Posterior vena cava (tissue), 2 donors: ENCODE measurements at regions of chr4 and their contacts with region 1.

Region 1: GRCh38 chr4:87848622-87849351 is 16.0 kb downstream of the MEPE start:
- DNase-seq: peak; percentile 76

Region 2: DNA sequence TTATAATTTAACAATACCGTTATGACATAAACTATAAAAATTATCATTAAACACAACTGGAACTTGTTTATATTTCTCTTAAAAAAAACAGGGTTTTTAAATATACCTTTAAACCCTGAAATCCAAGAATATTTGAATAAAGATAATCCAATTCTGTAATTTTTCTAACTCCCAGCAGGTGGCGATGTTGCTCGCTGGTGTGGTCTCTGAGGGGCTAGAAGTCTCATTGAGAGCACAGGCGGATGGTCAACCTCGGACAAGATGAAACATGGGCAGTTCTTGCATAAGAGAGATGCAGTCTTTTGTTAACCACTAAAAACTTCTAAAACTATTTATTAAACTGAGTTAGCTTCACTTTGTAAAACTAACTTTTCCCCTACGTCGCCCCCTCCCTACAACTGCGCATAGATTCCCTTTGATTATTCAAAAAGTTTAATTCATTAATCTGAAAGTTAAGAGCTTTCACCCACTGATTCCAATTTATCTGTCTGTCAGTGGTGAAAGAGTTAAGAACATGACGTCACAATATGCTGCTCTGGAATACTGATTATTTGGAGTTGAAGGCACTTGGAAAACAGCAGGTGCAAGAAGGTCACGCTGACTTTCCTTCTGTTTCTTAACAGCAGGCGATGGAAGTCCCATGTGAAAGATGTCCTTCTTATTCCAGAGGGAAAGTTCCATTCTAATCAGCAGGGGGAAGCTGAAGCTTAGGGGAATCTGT is 169.2 kb before region 1 on chr4:
- intact Hi-C with region 1: loop called in 1 of 2 experiments (anchors 5 kb)
- DNase-seq: no peak

Region 3: GRCh38 chr4:87973283-87974169 is 124.7 kb after region 1 on chr4:
- intact Hi-C with region 1: loop called in 1 of 2 experiments (anchors 5 kb)
- DNase-seq: no peak

Region 4: DNA sequence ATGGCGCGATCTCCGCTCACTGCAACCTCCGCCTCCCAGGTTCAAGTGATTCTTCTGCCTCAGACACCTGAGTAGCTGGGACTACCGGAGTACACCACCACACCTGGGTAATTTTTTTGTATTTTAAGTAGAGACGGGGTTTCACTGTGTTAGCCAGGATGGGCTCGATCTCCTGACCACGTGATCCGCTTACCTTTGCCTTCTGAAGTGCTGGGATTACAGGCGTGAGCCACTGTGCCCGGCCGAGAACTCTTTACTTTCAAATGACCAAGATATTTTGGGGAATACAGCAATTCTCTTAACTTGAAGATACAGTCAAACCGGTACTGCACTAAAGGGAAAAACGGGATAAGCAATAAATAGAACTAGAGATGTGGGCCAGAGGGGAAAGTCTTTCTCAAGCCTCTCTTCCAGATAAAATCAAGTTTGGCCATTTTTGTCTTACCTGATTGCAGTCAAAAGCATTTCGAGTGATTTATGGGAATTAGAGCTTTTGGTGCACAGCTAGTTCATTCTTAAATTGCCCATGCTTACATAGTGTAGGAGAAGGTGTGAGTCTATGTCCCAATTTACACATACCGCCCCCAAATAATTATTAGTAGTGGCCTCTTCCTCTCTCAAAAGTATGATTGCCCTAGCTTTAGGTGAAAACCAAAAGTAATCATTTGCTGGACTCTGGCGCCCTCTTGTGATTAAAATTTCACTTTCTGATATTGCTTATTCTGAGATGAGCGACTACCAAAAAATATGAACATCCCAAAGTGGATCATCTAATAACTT is 362.9 kb after region 1 on chr4:
- intact Hi-C with region 1: loop called in 1 of 2 experiments (anchors 5 kb)
- DNase-seq: no peak